ENCODE measurements at regions of chr6 and their contacts with region 1.

Region 1: DNA sequence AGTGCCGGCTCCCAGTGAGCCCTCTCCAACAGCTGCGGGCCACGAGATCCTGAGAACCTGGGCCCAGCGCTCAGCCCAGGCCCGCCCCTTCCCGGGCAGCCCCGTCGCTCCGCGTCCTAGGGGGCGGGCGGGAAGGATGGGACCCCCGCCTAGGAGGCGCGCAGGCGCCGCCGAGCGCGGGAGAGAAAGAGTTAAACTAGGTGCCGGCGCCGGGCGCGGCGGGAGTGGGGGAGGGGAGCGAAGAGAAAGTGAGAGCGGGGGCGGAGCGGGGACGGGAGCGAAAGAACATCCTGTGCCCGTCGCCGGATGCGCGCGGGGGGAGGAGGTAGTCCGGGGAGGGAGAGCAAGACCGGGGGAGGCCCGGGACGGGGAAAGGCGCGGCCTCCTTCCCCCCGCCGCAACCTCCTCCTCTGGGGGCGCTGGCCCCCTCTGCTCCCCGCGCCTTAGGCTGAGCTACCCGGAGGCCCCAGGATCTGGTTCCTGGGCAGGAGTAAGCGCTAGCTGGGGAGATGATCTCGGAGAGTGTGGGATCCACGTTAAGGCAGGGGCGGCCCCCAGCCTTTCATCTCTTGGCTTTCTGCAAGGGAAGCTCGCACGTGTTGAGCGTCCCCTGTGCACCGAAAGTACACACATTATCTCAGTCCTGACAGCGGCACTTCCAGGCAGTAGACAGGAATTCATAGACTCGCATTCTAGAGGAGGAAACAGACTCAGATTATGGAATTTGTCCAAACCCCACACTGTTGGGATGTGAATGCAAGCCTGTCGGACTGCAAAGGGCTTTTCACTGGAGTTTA is 4.9 kb upstream of the ARMC12 start:
- DNase-seq: peak; percentile 91
- H3K4me3 Mint-ChIP-seq: peak overlapping the region; percentile 85
- H3K27ac Mint-ChIP-seq: peak overlapping the region; percentile 81
- H3K4me1 Mint-ChIP-seq: peaks cover 63% of the 10 kb centered on the region
- H3K27me3 Mint-ChIP-seq: no peaks in the 10 kb centered on the region

Region 2: GRCh38 chr6:35522660-35523658 is 209.0 kb before region 1 on chr6:
- intact Hi-C with region 1: loop called (anchors 1 kb)
- DNase-seq: peak; percentile 48
- H3K4me3 Mint-ChIP-seq: peak overlapping the region; percentile 69
- H3K27ac Mint-ChIP-seq: peak overlapping the region; percentile 52
- H3K4me1 Mint-ChIP-seq: peaks cover 19% of the 10 kb centered on the region
- H3K27me3 Mint-ChIP-seq: peaks cover 12% of the 10 kb centered on the region

Region 3: GRCh38 chr6:35624341-35625070 is 107.4 kb before region 1 on chr6:
- intact Hi-C with region 1: loop called (anchors 1 kb)
- DNase-seq: no peak
- H3K4me3 Mint-ChIP-seq: no peak overlapping the region
- H3K27ac Mint-ChIP-seq: peak overlapping the region; percentile 27
- H3K4me1 Mint-ChIP-seq: peaks cover 19% of the 10 kb centered on the region
- H3K27me3 Mint-ChIP-seq: no peaks in the 10 kb centered on the region

Region 4: DNA sequence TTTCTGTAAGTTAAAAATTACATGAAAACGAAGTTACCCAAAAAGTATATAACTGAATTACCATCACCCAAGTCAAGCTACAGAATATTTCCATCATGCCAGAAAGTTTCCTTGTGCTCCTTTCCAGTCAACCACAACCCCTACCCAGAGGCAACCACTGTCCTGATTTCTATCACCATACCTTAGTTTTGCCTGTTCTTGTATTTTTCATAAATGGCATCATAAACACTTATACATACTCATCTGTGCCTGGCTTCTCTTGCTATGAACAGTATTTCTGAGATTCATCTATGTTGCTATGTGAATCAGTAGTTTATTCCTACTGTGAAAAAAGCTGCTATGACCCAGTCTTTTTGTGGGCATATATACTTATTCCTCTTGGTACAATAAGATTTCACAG is 50.6 kb before region 1 on chr6:
- intact Hi-C with region 1: loop called (anchors 1 kb)
- DNase-seq: no peak
- H3K4me3 Mint-ChIP-seq: peak overlapping the region; percentile 8
- H3K27ac Mint-ChIP-seq: peak overlapping the region; percentile 72
- H3K4me1 Mint-ChIP-seq: peaks cover 39% of the 10 kb centered on the region
- H3K27me3 Mint-ChIP-seq: no peaks in the 10 kb centered on the region

Region 5: DNA sequence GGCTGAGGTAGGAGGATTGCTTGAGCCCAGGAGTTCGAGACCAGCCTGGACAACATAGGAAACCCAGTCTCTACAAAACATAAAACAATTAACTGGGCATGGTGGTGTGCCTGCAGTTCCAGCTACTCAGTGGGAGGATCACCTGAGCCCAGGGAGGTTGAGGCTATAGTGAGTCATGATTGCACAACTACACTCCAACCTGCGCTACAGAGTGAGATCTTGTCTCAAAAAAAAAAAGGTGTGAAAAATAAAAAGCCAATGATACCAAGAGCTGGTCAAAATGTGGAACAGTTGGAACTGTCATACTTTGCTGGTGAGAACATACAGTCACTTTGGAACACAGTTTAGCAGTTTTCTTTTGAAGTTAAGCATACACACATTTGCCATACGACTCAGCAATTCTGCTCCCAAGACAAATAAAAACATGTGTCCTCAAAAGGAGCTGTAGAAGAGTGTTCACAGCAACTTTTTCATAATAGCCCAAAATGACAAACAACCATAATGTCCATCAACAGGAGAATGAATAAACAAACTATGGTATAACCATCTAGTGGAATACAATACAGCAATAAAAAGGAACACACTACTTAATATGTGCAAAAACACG is 21.6 kb before region 1 on chr6:
- intact Hi-C with region 1: loop called (anchors 1 kb)
- DNase-seq: no peak
- H3K4me3 Mint-ChIP-seq: peak overlapping the region; percentile 50
- H3K27ac Mint-ChIP-seq: peak overlapping the region; percentile 82
- H3K4me1 Mint-ChIP-seq: peaks cover 50% of the 10 kb centered on the region
- H3K27me3 Mint-ChIP-seq: no peaks in the 10 kb centered on the region

Region 6: GRCh38 chr6:35810971-35811497 is 79.1 kb after region 1 on chr6:
- intact Hi-C with region 1: no loop called
- DNase-seq: no peak
- H3K4me3 Mint-ChIP-seq: no peak overlapping the region
- H3K27ac Mint-ChIP-seq: no peak overlapping the region
- H3K4me1 Mint-ChIP-seq: no peaks in the 10 kb centered on the region
- H3K27me3 Mint-ChIP-seq: no peaks in the 10 kb centered on the region

Region 7: DNA sequence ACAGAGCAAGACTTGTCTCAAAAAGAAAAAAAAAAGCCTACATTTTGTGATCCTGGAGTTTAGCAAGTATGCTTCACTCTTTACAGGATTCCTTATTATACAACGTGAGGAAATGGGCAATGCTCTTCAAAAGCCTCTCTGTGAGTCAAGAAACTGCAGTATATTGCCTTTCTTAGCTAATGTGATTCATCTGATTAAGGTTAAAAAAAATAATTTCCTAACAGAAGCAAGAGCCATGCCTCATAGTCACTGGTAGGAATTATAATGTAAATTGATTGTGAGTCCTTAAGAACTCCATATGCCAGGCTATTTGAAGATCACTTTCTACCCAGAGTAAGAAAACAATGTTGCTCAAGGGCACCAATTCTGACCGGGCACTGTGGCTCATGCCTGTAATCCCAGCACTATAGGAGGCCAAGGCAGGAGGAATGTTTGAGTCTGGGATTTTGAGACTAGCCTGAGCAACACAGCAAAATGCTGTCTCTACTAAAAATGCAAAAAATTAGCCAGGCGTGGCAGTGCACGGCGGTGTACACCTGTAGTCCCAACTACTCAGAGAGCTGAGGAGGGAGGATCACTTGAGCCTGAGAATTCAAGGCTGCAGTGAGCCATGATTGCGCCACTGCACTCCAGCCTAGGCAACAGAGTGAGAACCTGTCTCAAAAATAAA is 249.2 kb after region 1 on chr6:
- intact Hi-C with region 1: no loop called
- DNase-seq: no peak
- H3K4me3 Mint-ChIP-seq: no peak overlapping the region
- H3K27ac Mint-ChIP-seq: no peak overlapping the region
- H3K4me1 Mint-ChIP-seq: no peaks in the 10 kb centered on the region
- H3K27me3 Mint-ChIP-seq: peaks cover 22% of the 10 kb centered on the region

Measured in activated T-helper 1 cell treated with anti-CD3 and anti-CD28 coated beads, Interleukin-12 subunit alpha, Interleukin-12 subunit beta, Interleukin-2, Interleukin-4 antibody, amounts not matched to agents 30 ng/mL and 10 ng/mL and 1 ng/mL, durations not matched to agents 14 hours and 24 hours and 36 hours (primary cell).